ENCODE measurements at regions of chr1 and their contacts with region 1.

Region 1: DNA sequence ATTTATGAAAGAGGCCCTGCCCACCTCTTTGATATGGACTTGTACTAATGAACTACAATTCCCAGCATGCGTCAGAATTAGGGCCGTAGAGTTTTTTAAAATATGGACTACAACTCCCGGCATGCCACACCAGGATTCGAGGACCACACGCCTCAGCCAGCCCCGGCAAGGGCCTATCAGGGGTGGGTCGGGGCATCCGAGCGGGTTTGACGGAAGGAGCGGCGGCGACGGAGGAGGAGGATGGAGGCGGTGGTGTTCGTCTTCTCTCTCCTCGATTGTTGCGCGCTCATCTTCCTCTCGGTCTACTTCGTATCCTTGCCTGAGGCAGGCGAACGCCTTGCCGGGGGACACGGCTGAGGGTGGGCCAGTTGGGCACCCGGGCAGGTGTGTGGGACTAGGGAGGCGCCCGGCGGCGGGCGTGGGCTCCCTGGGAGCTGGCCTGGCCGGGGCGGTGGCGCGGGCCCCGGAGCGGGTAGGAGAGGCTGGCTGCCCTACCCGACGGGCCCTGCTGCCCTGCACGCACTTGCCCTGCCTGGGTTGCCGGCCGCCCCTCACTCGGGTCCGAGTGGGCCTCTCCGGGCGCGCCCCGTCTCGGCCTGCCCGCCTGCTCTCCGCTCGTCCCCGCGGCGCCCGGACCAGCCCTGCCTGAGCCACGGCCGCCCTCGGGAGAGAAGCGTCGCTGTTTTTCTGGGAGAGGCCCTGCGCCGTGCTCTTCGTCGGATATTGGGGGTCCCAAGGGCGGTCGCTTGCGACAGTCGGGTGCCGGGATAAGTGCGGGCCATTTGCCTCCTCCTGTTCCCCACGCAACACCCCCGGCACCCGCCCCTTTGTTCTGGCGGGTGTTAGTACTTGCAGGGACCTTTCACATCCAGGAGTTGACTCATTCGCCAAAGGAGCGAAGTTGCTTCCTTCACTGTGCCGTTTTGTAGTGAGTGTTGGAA is at the start of gene CNIH4:
- DNase-seq: peak; percentile 89
- H3K4me3 Mint-ChIP-seq: peak within 1 kb of the TSS; percentile 93
- H3K27ac Mint-ChIP-seq: peak within 1 kb of the TSS; percentile 93
- H3K4me1 Mint-ChIP-seq: peaks cover 28% of the 10 kb centered on the region
- H3K27me3 Mint-ChIP-seq: no peaks in the 10 kb centered on the region
- total RNA-seq, gene CNIH4: 80.7 and 82.3 TPM in 2 replicates

Region 2: DNA sequence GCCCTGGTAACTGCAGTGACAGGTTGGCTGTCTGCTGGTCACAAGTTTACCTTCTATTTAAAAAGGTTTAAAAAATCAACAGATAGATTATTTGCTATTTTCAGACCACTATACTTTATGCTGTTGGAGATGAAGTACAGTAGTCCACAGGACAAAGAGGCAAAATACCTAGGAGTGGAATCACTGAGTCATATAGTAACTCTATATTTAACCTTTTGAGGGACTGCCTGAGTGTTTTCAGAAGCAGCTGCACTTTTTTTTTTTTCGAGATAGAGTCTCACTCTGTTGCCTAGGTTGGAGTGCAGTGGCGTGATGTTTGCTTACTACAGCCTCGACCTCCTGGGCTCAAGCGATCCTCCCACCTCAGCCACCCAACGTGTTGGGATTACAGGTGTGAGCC is 11.5 kb after region 1 on chr1:
- intact Hi-C with region 1: loop called (anchors 1 kb)
- DNase-seq: no peak
- H3K4me3 Mint-ChIP-seq: peak overlapping the region; percentile 53
- H3K27ac Mint-ChIP-seq: peak overlapping the region; percentile 75
- H3K4me1 Mint-ChIP-seq: peaks cover 74% of the 10 kb centered on the region
- H3K27me3 Mint-ChIP-seq: no peaks in the 10 kb centered on the region

Region 3: DNA sequence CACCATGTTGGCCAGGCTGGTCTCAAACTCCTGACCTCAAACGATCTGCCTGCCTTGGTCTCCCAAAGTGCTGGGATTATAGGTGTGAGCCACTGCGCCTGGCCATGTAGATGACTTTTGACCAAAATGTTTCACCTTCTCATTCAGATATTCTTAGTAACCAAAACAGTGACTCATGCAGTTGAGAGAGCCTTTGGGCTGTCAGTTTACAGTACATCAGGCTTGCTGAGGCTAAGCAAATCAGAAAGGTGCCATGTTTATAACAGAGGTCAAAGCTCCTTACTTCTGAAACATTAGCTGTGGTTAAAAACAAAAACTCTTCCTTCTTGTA is 20.7 kb after region 1 on chr1:
- intact Hi-C with region 1: loop called (anchors 1 kb)
- DNase-seq: no peak
- H3K4me3 Mint-ChIP-seq: peak overlapping the region; percentile 66
- H3K27ac Mint-ChIP-seq: peak overlapping the region; percentile 94
- H3K4me1 Mint-ChIP-seq: peaks cover 91% of the 10 kb centered on the region
- H3K27me3 Mint-ChIP-seq: no peaks in the 10 kb centered on the region

Measured in activated T-helper 1 cell treated with anti-CD3 and anti-CD28 coated beads, Interleukin-12 subunit alpha, Interleukin-12 subunit beta, Interleukin-2, Interleukin-4 antibody, amounts not matched to agents 30 ng/mL and 10 ng/mL and 1 ng/mL, durations not matched to agents 14 hours and 24 hours and 36 hours (primary cell).